ENCODE measurements at regions of chr14 and their contacts with region 1.

Region 1: DNA sequence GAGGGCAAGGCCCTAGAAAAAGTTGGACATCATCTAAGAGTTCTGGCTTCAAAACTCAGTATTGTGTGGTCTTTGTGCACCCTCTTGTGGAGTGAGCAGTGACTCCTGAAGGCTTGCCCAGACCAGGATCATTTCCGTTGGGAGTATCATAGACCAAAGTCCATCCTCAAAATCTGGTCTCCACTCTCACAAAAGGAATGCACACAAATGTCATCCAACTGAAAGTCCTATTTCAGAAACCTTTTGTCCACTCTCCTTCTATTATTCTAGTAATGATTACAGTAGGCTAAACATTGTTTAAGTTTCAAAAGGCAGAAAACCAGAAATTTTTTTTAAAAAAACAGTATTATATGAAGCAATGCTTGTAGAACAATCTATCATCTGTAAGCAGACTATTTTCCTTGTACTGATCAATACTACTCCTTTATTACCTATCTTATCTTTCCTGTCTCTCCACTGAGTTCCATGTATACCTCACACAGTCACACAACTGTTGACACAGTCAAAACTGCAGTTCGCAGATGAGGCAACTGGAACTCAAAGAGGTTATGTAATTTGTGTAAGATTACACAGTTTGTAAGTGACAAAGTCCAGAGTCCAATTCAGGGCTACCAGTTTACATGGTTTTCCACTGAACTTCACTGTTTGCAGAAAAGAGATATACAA is 41.4 kb downstream of the COX16 start:
- ATAC-seq: peak; percentile 71 to 99 (median 88)
- H3K4me3 ChIP-seq: no peak overlapping the region
- H3K27ac ChIP-seq: no peak overlapping the region
- H3K4me1 ChIP-seq: no peaks in the 10 kb centered on the region

Region 2: DNA sequence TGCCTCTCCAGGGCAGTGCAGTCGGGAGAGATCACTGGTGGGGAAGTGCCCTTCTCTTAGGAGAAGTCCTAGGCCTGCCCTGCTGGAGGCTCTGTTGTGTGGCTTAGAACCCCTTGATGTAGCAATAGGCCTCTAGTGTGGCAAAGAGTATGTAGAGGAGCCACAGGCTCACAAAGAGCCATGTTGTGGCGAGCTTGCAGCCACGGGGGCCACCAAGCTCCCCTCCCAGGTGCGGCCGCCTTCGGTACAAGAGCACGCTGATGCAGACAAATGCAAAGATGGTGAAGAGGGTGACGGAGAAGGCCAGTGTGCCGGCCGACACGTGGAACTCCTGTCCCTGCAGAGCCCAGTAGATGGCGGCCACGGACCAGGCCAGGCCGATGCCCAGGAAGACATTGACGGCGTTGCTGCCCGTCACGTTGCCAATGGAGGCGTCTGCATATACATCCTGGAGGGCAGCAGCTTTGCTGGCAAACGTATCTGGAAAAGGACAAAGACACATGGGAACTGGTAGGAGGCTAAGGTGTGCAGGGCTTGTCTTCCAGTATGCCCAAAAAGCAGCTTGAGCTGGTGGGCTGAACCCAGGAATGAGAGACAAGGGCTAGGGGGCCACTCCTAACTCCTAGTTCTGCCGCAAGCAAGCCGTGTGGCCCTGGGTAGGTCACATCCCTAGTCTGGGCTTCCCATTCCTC is 272.1 kb before region 1 on chr14:
- in situ Hi-C with region 1: loop called in 1 of 9 experiments (anchors 10 kb)
- ATAC-seq: peak; percentile 52 to 99 (median 82)
- H3K4me3 ChIP-seq: no peak overlapping the region
- H3K27ac ChIP-seq: no peak overlapping the region
- H3K4me1 ChIP-seq: peaks cover 0 to 2% of the 10 kb centered on the region in 2 donors

Region 3: GRCh38 chr14:70086685-70087379 is 231.3 kb before region 1 on chr14:
- in situ Hi-C with region 1: loop called in 3 of 9 experiments (anchors 25 kb)
- ATAC-seq: peak in 4 of 8 experiments; percentile 29 to 69 (median 62)
- H3K4me3 ChIP-seq: no peak overlapping the region
- H3K27ac ChIP-seq: no peak overlapping the region
- H3K4me1 ChIP-seq: no peaks in the 10 kb centered on the region

Region 4: DNA sequence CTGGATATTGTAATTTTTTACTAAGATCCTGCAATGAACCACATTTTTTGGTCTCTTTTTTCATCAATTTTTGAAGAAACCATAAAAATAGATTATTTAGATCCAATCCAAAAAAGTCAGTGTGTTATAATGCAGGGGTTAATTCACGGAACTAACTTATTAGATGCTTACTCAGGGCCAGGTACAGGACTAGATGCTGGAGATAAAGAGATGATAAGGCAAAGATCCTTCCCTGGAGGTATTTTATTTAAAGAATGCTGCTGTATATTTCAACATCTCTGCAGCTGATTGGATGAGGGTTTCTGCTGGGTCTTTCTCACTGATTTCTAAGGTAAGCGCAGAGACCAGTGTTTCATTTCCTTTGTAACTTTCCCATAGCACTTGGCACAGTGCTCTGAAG is 64.9 kb after region 1 on chr14:
- in situ Hi-C with region 1: no loop called
- ATAC-seq: no peak
- H3K4me3 ChIP-seq: no peak overlapping the region
- H3K27ac ChIP-seq: no peak overlapping the region
- H3K4me1 ChIP-seq: no peaks in the 10 kb centered on the region

Measured in motor neuron (in vitro differentiated cells).